Panc1 (cell line): ENCODE measurements at regions of chr19 and their contacts with region 1.

Region 1: GRCh38 chr19:35748106-35749020 is at the start of gene LIN37:
- DNase-seq: peak; percentile 100
- ATAC-seq: peak; percentile 90
- H3K4me3 ChIP-seq: peak within 1 kb of the TSS; percentile 87 to 89
- H3K27ac ChIP-seq: peak within 1 kb of the TSS; percentile 92
- H3K4me1 ChIP-seq: peaks cover 24% of the 10 kb centered on the region
- H3K27me3 ChIP-seq: no peaks in the 10 kb centered on the region
- CTCF ChIP-seq: no peak
- total RNA-seq, gene LIN37: 23.5 TPM

Region 2: DNA sequence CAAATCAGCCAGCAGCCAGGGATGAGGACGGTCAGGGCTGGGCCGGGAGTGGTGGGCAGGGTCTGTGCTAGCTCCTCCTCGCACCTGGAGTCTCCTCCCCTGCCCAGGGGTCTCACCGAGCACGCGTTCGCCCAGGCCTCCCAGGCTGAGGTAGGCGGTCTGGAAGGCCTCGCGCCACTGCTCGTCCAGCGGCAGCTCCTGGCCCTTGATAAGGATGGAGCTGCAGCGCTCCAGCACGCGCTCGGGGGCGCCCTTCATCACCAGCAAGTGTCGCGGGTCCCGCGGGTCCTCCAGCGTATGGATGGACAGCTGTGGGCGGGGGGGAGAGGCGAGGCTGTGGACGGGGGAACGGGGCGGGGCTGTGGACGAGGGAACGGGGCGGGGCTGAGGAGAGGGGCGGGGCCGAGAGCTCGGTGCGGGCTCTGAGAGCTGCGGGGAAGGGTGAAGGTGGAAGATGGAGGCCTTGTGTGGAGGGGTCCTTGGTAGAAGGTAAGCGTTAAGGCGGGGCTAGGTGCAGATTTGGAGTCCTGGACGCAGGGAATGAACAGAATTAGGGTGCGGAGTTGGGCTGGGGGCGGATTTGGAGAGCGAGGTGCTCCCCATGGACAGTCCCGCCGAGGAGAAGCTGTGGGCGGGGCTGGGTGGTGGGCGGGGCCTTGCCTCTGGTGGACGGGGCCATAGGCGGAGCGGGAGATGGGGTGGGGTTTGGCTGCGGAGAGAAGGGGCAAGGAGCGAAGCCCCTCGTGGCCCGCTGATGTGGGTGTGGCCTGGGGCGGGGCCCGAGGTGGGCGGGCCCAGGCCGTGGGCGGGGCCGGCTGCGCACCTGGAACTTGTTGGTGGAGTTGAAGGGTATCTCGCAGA is 190.6 kb before region 1 on chr19:
- CTCF ChIA-PET with region 1: no interaction called
- POLR2A ChIA-PET with region 1: interaction called, 16 read pairs
- in situ Hi-C with region 1: no loop called
- intact Hi-C with region 1: no loop called
- DNase-seq: no peak
- ATAC-seq: peak; percentile 84
- H3K4me3 ChIP-seq: peak overlapping the region; percentile 31 to 70
- H3K27ac ChIP-seq: no peak overlapping the region
- H3K4me1 ChIP-seq: peaks cover 6% of the 10 kb centered on the region; the same call in 1 of the 2 replicates
- H3K27me3 ChIP-seq: peaks cover 6% of the 10 kb centered on the region; the same call in 1 of the 2 replicates
- CTCF ChIP-seq: no peak

Region 3: GRCh38 chr19:35596366-35596999 is 151.9 kb before region 1 on chr19:
- CTCF ChIA-PET with region 1: no interaction called
- POLR2A ChIA-PET with region 1: no interaction called
- in situ Hi-C with region 1: no loop called
- intact Hi-C with region 1: no loop called
- DNase-seq: no peak
- ATAC-seq: peak; percentile 69; the same call in 1 of the 2 replicates
- H3K4me3 ChIP-seq: no peak overlapping the region
- H3K27ac ChIP-seq: no peak overlapping the region
- H3K4me1 ChIP-seq: no peaks in the 10 kb centered on the region
- H3K27me3 ChIP-seq: no peaks in the 10 kb centered on the region
- CTCF ChIP-seq: no peak

Region 4: GRCh38 chr19:35822579-35822978 is 74.2 kb after region 1 on chr19:
- CTCF ChIA-PET with region 1: interaction called, 7 read pairs
- POLR2A ChIA-PET with region 1: interaction called, 12 read pairs
- in situ Hi-C with region 1: no loop called
- intact Hi-C with region 1: no loop called
- DNase-seq: no peak
- ATAC-seq: peak; percentile 46; the same call in 1 of the 2 replicates
- H3K4me3 ChIP-seq: no peak overlapping the region
- H3K27ac ChIP-seq: no peak overlapping the region
- H3K4me1 ChIP-seq: no peaks in the 10 kb centered on the region
- H3K27me3 ChIP-seq: no peaks in the 10 kb centered on the region
- CTCF ChIP-seq: no peak

Region 5: GRCh38 chr19:35869327-35870123 is 121.2 kb after region 1 on chr19:
- CTCF ChIA-PET with region 1: no interaction called
- POLR2A ChIA-PET with region 1: interaction called, 13 read pairs
- in situ Hi-C with region 1: no loop called
- intact Hi-C with region 1: no loop called
- DNase-seq: peak; percentile 93
- ATAC-seq: peak; percentile 91
- H3K4me3 ChIP-seq: peak overlapping the region; percentile 53 to 89
- H3K27ac ChIP-seq: peak overlapping the region; percentile 61
- H3K4me1 ChIP-seq: peaks cover 9% of the 10 kb centered on the region
- H3K27me3 ChIP-seq: no peaks in the 10 kb centered on the region
- CTCF ChIP-seq: no peak

Region 6: DNA sequence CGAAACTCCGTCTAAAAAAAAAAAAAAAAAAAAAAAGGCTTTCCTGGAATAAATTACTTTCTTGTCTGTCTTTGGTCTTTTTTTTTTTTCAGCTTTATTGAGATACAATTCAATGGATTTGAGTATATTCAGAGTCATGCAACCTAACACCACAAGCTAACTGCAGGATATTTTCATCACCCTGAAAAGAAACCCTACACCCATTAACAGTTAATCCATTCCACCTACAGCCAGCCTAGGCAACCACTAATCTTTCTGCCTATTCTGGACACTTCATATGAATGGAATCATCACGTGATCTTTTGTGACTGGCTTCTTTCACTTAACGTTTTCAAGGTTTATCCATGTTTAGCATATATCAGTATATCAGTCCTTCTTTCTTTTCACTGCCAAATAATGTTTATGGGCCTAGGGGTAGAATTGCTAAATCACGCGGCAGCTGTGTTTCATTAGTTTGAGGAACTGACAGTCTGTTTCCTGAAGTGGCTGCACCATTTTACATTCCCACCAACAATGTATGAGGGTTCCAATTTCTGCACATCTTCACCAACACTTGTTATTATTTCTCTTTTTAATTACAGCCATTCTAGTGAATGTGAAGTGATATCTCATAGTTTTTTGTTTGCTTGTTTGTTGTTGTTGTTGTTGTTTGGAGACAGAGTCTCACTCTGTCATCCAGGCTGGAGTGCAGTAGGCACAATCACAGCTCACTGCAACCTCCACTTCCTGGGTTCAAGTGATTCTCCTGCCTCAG is 207.7 kb after region 1 on chr19:
- CTCF ChIA-PET with region 1: no interaction called
- POLR2A ChIA-PET with region 1: interaction called, 21 read pairs
- in situ Hi-C with region 1: no loop called
- intact Hi-C with region 1: no loop called
- DNase-seq: no peak
- ATAC-seq: no peak
- H3K4me3 ChIP-seq: no peak overlapping the region
- H3K27ac ChIP-seq: no peak overlapping the region
- H3K4me1 ChIP-seq: no peaks in the 10 kb centered on the region
- H3K27me3 ChIP-seq: peaks cover 5% of the 10 kb centered on the region; the same call in 1 of the 2 replicates
- CTCF ChIP-seq: no peak